ENCODE measurements at regions of chr9 and their contacts with region 1.

Region 1: GRCh38 chr9:76393963-76394679 is at the start of gene RFK:
- DNase-seq: peak; percentile 94
- ATAC-seq: peak; percentile 91
- H3K4me3 Mint-ChIP-seq: peak within 1 kb of the TSS; percentile 98
- H3K27ac Mint-ChIP-seq: peak within 1 kb of the TSS; percentile 98
- H3K4me1 Mint-ChIP-seq: peaks cover 16% of the 10 kb centered on the region
- H3K27me3 Mint-ChIP-seq: no peaks in the 10 kb centered on the region
- total RNA-seq, gene RFK: 12.8 to 13.9 TPM

Region 2: DNA sequence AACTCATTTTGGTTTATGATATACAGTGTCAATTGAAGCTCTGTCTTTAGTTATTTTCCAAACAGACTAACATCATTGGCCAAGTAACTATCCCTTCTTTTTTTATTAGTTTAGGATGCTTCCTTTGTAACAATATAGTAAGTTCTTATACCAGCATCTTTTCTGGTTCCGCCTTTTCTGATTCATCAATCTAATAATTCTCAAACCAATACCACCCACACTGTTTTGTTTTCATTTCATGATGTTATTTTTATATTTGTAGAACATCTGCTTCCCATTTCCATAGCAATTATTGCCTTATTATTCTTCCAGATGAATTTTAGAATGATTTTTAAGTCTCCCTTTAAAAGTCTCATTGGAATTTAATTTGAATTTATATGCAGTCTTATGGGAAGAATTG is 217.9 kb before region 1 on chr9:
- POLR2A ChIA-PET with region 1: no interaction called
- DNase-seq: no peak
- ATAC-seq: no peak
- H3K4me3 Mint-ChIP-seq: no peak overlapping the region
- H3K27ac Mint-ChIP-seq: no peak overlapping the region
- H3K4me1 Mint-ChIP-seq: peaks cover 13% of the 10 kb centered on the region
- H3K27me3 Mint-ChIP-seq: no peaks in the 10 kb centered on the region

Region 3: DNA sequence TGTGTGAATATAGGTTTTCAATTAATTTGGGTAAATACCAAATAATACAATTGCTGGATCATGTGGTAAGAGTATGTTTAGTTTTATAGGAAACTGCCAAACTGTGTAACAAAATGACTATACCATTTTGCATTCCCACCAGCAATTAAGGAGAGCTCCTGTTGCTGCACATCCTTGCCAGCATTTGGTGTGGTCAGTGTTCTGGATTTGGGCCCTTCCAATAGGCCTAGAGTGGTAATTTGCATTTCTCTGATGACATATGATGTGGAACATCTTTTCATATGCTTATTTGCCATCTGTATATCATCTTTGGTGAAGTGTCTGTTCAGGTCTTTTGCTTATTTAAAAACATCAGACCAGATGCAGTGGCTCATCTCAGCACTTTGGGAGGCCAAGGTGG is 11.7 kb after region 1 on chr9:
- POLR2A ChIA-PET with region 1: interaction called, 14 read pairs
- DNase-seq: no peak
- ATAC-seq: no peak
- H3K4me3 Mint-ChIP-seq: no peak overlapping the region
- H3K27ac Mint-ChIP-seq: no peak overlapping the region
- H3K4me1 Mint-ChIP-seq: peaks cover 16% of the 10 kb centered on the region
- H3K27me3 Mint-ChIP-seq: no peaks in the 10 kb centered on the region